CD14-positive monocyte (primary cell): ENCODE measurements at regions of chr16 and their contacts with region 1.

Region 1: DNA sequence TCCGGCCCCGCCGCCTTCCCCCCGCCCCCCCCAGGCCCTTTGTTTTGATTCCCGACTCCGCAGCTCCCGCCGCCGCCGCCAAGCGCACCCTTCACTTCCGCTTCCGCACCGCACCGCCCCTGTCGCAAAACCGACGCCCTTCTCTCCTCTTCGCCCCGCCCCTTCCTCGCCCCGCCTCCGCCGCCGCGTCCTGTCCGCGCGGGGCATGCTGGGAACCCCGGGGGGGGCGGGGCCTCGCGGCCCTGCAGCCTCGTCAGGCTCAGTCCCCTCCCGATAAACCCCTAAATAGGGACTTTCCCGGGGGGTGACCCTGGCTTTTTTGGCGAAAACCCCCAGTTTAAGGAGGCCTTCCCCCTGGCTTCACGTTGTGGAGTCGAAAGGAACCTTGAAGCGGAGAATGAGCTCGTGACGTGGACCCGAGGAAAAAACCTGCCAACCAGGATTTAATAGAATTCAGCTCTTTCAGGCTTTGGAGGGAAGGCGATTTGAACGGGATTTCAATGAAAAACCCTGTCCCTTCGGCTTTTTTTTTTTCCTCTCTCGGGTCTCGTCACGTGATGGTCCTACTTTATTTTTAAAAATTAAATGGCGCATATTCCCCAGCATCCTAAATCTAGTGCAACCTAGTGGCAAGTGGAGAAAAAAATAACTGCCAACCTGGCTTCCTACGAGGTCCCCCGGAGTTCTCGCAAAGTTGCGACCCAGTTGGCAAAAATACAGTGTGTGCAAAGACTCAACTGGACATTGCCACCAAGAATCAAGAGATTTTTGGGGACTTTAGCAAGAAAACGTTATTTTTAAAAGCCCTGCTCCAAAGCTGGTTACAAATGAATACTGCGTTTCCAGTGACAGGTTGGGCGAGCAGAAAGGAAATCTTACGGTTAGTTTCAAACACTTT is at the start of gene MARF1:
- DNase-seq: peak; percentile 92 to 98 (median 97)
- H3K4me3 ChIP-seq: peak within 1 kb of the TSS; percentile 87 to 89 (median 88)
- H3K4me3 Mint-ChIP-seq: peak within 1 kb of the TSS; percentile 92 to 93
- H3K27ac ChIP-seq: peak within 1 kb of the TSS; percentile 94 to 98
- H3K27ac Mint-ChIP-seq: peak within 1 kb of the TSS; percentile 98 to 99 (median 99)
- H3K4me1 ChIP-seq: peaks cover 19 to 27% of the 10 kb centered on the region in 2 donors
- H3K4me1 Mint-ChIP-seq: peaks cover 23% of the 10 kb centered on the region
- H3K27me3 ChIP-seq: no peaks in the 10 kb centered on the region
- H3K27me3 Mint-ChIP-seq: peaks cover 0 to 1% (median 0%) of the 10 kb centered on the region in 3 donors
- CTCF ChIP-seq: peak; percentile 61
- polyA plus RNA-seq, gene MARF1: 5.7 to 39.9 (median 9.8) TPM

Region 2: DNA sequence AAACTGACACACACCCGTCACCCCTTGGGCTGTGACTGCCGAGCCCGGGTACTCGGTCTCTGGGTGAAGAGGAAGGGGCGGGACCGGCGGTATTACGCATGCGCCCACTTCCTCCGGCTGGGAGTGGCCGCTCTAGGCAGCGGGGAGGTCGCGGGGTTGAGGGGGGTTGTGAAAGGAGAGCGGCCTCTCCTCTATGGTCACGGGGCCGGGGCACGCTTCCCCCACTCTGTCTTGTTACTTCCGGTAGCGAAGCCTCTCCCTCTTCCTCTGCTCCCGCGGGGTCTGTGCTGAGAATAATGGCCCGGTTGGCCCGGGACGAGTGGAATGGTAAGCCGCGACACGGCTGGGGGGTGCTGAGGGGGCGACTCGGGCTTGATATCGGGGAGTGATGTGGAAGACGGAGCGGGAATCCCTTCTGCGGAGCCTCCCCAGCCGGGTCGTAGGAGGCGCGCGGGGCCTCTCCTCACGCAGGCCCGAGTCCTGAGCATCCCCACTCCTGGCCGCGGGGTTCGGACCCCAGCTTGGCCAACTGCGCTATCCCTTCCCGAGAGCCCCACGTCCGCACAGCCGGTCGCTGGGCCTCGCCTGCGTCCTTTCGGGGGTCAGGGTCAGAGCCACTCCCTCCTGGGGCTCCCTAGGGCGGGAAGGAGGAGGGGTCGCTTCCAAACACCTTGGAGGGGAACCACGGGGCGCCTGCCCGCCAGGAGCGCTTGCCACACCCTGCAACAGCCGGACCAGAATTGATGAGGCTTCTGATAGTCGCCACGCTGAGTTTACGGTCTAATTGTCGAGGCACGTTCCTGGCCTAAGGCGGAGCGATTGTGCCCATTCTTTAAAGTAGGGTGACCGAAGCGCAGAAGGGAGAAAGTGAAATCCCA is 1010.4 kb before region 1 on chr16 and contains the start of gene BFAR:
- intact Hi-C with region 1: loop called in 1 of 2 experiments (anchors 10 kb)
- DNase-seq: peak; percentile 98 to 99 (median 99)
- H3K4me3 ChIP-seq: peak within 1 kb of the TSS; percentile 65 to 95 (median 93)
- H3K4me3 Mint-ChIP-seq: peak within 1 kb of the TSS; percentile 99
- H3K27ac ChIP-seq: peak within 1 kb of the TSS; percentile 91 to 94
- H3K27ac Mint-ChIP-seq: peak within 1 kb of the TSS; percentile 97 to 100 (median 97)
- H3K4me1 ChIP-seq: peaks cover 39 to 48% of the 10 kb centered on the region in 2 donors
- H3K4me1 Mint-ChIP-seq: peaks cover 43% of the 10 kb centered on the region
- H3K27me3 ChIP-seq: no peaks in the 10 kb centered on the region
- H3K27me3 Mint-ChIP-seq: no peaks in the 10 kb centered on the region
- CTCF ChIP-seq: no peak
- polyA plus RNA-seq, gene BFAR: 27.5 to 36.0 (median 28.6) TPM

Region 3: GRCh38 chr16:15592324-15592723 is 51.0 kb before region 1 on chr16:
- intact Hi-C with region 1: loop called in 1 of 2 experiments (anchors 5 kb)
- DNase-seq: peak; percentile 22 to 41 (median 28)
- H3K4me3 ChIP-seq: peak overlapping the region in 1 of 3 experiments; percentile 26
- H3K4me3 Mint-ChIP-seq: no peak overlapping the region
- H3K27ac ChIP-seq: peak overlapping the region; percentile 63 to 82
- H3K27ac Mint-ChIP-seq: peak overlapping the region; percentile 90 to 99 (median 94)
- H3K4me1 ChIP-seq: peaks cover 74 to 80% of the 10 kb centered on the region in 2 donors
- H3K4me1 Mint-ChIP-seq: peaks cover 78% of the 10 kb centered on the region
- H3K27me3 ChIP-seq: no peaks in the 10 kb centered on the region
- H3K27me3 Mint-ChIP-seq: no peaks in the 10 kb centered on the region
- CTCF ChIP-seq: no peak

Region 4: DNA sequence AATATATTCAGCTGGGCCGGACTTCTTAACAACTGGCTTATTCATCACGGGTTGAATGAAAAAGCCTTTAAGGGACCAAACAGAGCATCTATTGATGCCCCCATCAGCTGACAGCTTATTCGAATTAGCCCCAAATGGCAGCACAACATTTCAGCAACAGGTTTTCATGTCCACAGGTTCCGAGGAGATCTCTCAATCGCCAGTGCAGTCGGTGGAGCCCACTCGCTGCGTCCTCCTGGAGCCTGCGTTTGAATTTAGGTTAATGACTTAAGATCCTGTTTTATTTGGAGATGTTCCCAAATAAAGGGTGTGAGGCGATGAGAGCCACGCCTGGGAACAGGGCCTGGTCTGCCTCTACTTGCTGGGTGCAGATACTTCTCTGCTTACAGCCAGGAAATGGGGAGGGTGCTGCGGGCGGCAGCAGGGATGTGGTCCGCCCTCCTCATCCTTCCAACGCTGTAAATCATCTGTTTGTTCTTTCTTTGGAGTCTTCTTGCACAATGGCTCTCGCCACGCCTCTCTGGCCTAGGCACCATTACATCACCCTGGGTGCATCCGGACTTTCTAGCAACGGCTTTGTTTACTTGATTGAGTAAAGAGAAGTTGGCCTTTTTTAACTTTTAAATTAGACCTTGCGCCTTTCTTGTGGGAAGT is 29.3 kb after region 1 on chr16:
- intact Hi-C with region 1: loop called in 1 of 2 experiments (anchors 2 kb)
- DNase-seq: peak; percentile 93 to 96 (median 93)
- H3K4me3 ChIP-seq: peak overlapping the region; percentile 26 to 69 (median 32)
- H3K4me3 Mint-ChIP-seq: peak overlapping the region; percentile 78 to 88
- H3K27ac ChIP-seq: peak overlapping the region; percentile 97 to 98
- H3K27ac Mint-ChIP-seq: peak overlapping the region; percentile 98 to 99 (median 99)
- H3K4me1 ChIP-seq: peaks cover 37 to 52% of the 10 kb centered on the region in 2 donors
- H3K4me1 Mint-ChIP-seq: peaks cover 54% of the 10 kb centered on the region
- H3K27me3 ChIP-seq: no peaks in the 10 kb centered on the region
- H3K27me3 Mint-ChIP-seq: peaks cover 0 to 7% (median 2%) of the 10 kb centered on the region in 3 donors
- CTCF ChIP-seq: no peak

Region 5: DNA sequence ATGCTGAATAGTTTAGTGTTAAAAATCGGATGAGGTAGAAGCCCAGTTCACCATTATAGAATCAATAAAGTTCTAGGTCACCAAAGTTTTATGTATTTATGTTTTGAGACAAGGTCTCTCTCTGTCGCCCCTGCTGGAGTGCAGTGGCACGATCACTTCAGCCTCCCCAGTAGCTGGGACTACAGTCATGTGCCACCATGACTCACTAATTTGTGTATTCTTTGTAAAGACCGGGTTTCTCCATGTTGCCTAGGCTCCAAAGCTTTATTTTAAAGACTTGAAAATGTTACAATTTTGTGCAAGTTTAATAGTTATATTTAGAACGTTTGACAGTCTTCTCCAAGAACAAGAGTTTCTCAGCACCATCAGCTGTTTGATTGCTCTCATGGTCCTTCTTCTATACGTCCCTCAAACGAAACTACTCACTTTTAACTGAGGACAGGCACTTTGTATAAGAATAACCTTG is 38.8 kb after region 1 on chr16:
- intact Hi-C with region 1: loop called in 1 of 2 experiments (anchors 5 kb)
- DNase-seq: peak; percentile 79 to 89 (median 85)
- H3K4me3 ChIP-seq: no peak overlapping the region
- H3K4me3 Mint-ChIP-seq: no peak overlapping the region
- H3K27ac ChIP-seq: peak overlapping the region; percentile 31 to 76
- H3K27ac Mint-ChIP-seq: peak overlapping the region; percentile 57 to 87 (median 70)
- H3K4me1 ChIP-seq: peaks cover 3 to 6% of the 10 kb centered on the region in 2 donors
- H3K4me1 Mint-ChIP-seq: peaks cover 5% of the 10 kb centered on the region
- H3K27me3 ChIP-seq: no peaks in the 10 kb centered on the region
- H3K27me3 Mint-ChIP-seq: peaks cover 0 to under 1% (median 0%) of the 10 kb centered on the region in 3 donors
- CTCF ChIP-seq: peak; percentile 86

Region 6: GRCh38 chr16:15888072-15888976 is 245.0 kb after region 1 on chr16 and contains the start of gene CEP20:
- intact Hi-C with region 1: loop called in 1 of 2 experiments (anchors 5 kb)
- DNase-seq: peak; percentile 99 to 100 (median 99)
- H3K4me3 ChIP-seq: peak within 1 kb of the TSS; percentile 58 to 95 (median 68)
- H3K4me3 Mint-ChIP-seq: peak within 1 kb of the TSS; percentile 100
- H3K27ac ChIP-seq: peak within 1 kb of the TSS; percentile 76 to 91
- H3K27ac Mint-ChIP-seq: peak within 1 kb of the TSS; percentile 98 to 100 (median 98)
- H3K4me1 ChIP-seq: peaks cover 14 to 21% of the 10 kb centered on the region in 2 donors
- H3K4me1 Mint-ChIP-seq: peaks cover 30% of the 10 kb centered on the region
- H3K27me3 ChIP-seq: no peaks in the 10 kb centered on the region
- H3K27me3 Mint-ChIP-seq: peaks cover 0 to 2% (median 0%) of the 10 kb centered on the region in 3 donors
- CTCF ChIP-seq: no peak
- polyA plus RNA-seq, gene CEP20: 11.6 to 27.3 (median 24.7) TPM